Breast epithelium (tissue), 4 donors: ENCODE measurements at regions of chr5 and their contacts with region 1.

Region 1: GRCh38 chr5:170479484-170479883 is 24.3 kb upstream of the KCNIP1 start:
- DNase-seq: no peak
- H3K4me3 ChIP-seq: no peak overlapping the region
- H3K27ac ChIP-seq: no peak overlapping the region
- H3K4me1 ChIP-seq: no peaks in the 10 kb centered on the region
- H3K27me3 ChIP-seq: no peaks in the 10 kb centered on the region
- CTCF ChIP-seq: no peak
- POLR2A ChIP-seq: no peak

Region 2: DNA sequence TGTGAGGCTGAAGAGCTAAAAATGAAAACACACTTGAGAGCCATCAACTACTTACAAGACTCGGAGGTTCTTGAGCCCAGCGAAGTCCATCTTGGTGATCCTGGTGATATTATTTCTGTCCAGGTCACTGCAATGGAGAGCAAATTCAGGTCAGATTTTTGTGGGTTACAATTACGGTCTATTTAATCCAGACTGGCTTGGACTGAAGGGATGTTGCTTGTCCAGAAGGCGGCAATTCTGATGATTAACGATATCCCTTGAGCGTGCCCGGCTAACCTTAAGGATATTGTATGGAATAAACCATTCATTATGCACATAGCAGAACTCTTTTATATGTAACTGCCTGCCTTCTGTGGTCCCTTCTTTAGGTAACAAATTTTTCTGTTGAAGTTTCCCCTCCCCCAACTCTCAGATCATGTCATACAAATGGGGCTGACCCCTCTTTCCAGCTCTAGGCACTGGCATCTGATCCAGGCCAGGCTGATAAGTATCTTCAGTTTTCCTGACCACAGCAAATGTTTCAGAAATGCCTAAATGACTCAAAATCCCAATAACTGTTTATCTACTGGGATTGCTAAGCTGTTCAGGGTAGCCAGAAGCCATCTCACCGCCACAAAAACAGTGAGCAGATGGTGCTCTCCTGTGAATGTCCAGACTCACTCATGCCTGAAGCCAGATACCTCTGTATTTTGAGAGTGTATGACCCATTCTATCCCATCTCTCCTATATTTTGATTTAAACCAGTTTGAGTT is 1228.0 kb before region 1 on chr5:
- intact Hi-C with region 1: loop called (anchors 5 kb)
- DNase-seq: no peak
- H3K4me3 ChIP-seq: no peak overlapping the region
- H3K27ac ChIP-seq: peak overlapping the region in 1 of 2 donors; percentile 3
- H3K4me1 ChIP-seq: no peaks in the 10 kb centered on the region
- H3K27me3 ChIP-seq: no peaks in the 10 kb centered on the region
- CTCF ChIP-seq: no peak
- POLR2A ChIP-seq: no peak

Region 3: DNA sequence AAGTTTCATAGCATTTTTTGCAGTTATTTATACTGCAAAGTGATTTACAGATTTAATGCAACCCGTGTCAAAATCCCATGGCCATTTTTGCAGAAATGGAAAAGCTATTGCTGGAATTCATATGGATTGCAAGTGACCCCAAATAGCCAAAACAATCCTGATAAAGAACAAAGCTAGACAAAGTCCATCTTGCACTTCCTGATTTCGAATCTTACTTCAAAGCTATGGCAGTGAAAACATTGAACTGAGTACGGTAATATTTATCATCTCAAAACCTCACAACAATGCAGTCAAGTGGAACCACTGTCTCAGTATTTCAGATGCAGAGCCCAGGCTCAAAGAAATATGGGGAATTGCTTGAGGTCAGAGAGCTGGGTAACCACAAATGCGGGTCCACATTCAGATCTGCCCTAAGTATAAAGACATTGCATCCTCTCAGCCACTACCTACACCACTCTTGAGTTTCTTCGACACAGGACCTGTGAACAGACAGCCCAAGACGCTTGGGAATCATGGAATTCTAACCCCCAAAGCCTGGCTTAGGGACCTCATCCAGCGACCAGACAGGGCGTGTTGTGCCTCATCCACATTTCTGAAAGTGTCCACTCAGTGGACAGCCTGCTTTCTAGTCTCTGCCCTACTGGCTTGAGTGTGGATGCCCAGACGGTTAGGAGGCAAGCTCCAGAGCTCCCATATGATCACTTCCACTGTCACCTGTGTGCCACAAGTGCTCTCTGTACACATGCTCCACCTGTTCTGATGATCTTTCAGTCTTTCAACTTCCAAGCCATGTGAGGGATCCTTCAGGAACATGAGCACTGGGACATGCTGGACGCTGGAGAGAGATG is 15.0 kb before region 1 on chr5:
- intact Hi-C with region 1: loop called (anchors 1 kb)
- DNase-seq: no peak
- H3K4me3 ChIP-seq: no peak overlapping the region
- H3K27ac ChIP-seq: no peak overlapping the region
- H3K4me1 ChIP-seq: no peaks in the 10 kb centered on the region
- H3K27me3 ChIP-seq: no peaks in the 10 kb centered on the region
- CTCF ChIP-seq: no peak
- POLR2A ChIP-seq: no peak